ENCODE measurements at regions of chr16 and their contacts with region 1.

Region 1: DNA sequence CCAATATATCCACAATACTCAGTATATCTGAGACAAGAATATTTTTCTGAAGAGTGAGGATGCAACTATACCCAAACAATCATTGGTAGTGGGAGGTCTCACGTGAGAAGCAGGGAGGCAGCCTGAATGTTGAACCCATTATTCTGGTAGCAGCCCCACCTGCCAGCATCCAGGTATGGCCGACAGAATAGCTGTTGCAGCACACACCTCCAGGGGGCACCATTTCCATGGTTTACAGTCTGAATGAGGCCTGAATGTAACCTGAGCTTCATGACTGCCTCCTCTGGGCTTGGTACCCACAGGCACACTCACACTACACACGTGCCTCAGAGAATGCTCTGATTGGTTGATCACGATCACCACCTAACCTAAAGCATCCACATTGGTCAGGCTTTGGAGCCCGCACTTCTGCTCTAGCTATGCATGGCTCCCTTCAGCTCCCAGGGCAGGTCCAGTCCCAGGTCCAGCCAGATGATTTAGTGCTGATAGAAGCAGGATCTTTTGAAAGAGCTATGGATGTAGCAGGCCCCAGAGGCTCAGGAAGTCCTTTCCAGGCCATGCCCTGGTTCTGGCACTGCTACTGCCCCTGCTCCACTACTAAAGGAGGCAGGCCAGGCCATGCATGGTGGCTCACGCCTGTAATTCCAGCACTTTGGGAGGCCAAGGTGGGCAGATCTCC is 11.0 kb upstream of the CBFB start:
- DNase-seq: peak; percentile 72 to 87 (median 77)
- H3K4me3 ChIP-seq: no peak overlapping the region
- H3K4me3 Mint-ChIP-seq: peak overlapping the region in 1 of 7 donors; percentile 61
- H3K27ac ChIP-seq: no peak overlapping the region
- H3K27ac Mint-ChIP-seq: peak overlapping the region in 3 of 8 donors; percentile 1 to 66 (median 64)
- H3K4me1 ChIP-seq: peaks cover 16% of the 10 kb centered on the region
- H3K4me1 Mint-ChIP-seq: peaks cover 2 to 9% (median 6%) of the 10 kb centered on the region in 3 donors
- H3K27me3 ChIP-seq: no peaks in the 10 kb centered on the region
- H3K27me3 Mint-ChIP-seq: peaks cover 0 to 3% of the 10 kb centered on the region in 2 donors

Region 2: DNA sequence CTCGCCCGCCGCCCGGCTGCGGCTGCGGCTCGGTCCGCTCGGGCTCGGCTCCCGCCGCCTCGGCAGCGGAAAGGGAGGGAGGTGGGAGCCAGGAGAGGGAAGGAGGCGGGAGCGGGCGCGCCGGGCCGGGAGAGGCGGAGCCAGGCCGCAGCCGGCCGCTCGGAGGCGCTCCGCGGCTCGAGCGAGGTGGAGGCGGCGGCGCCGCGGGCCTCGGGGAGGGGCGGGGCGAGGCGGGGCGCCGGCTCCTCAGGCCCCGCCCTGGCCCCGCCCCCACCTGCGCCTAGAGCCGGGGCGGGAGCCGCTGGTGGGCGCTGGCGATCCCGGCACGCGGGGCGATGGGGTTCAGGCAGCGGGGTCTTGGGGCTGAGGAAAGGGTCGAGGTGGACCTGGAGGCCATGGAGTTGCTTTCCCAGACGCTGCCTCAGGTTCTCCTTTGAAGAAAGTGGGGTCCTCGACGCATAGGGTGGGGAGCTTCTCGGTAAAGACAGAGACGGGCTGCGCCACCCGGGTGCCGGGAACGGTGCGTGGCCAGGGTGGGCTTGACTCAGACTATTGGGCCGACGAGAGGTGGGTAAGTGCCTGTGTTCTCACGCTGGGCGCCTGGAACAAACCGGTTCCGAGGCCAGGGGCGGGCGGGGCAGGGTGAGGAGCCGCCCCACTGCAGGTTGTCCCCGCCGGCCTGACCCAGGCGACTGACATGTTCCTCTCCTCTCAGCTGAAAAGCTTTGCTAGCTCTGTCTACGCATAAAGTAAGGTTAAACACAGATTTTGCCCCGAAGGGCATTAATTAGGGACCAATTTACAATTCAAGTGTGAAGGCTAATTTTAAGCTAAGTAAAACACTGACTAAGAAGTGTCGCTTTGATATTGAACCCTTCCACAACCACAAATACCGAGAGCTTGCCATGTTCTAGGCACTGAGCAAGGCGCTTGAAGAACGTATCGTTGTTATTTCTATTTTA is 321.0 kb before region 1 on chr16 and contains the start of gene CMTM4:
- CTCF ChIA-PET with region 1: no interaction called
- POLR2A ChIA-PET with region 1: no interaction called
- DNase-seq: peak; percentile 73 to 81 (median 75)
- H3K4me3 ChIP-seq: peak within 1 kb of the TSS; percentile 75
- H3K4me3 Mint-ChIP-seq: peak within 1 kb of the TSS; percentile 82 to 92 (median 85)
- H3K27ac ChIP-seq: peak within 1 kb of the TSS; percentile 9
- H3K27ac Mint-ChIP-seq: peak within 1 kb of the TSS in 4 of 8 donors; percentile 11 to 97 (median 56)
- H3K4me1 ChIP-seq: peaks cover 13% of the 10 kb centered on the region
- H3K4me1 Mint-ChIP-seq: peaks cover 5 to 17% (median 14%) of the 10 kb centered on the region in 3 donors
- H3K27me3 ChIP-seq: no peaks in the 10 kb centered on the region
- H3K27me3 Mint-ChIP-seq: peaks cover 9 to 13% of the 10 kb centered on the region in 2 donors
- total RNA-seq, gene CMTM4: 4.1 to 4.4 TPM

Region 3: DNA sequence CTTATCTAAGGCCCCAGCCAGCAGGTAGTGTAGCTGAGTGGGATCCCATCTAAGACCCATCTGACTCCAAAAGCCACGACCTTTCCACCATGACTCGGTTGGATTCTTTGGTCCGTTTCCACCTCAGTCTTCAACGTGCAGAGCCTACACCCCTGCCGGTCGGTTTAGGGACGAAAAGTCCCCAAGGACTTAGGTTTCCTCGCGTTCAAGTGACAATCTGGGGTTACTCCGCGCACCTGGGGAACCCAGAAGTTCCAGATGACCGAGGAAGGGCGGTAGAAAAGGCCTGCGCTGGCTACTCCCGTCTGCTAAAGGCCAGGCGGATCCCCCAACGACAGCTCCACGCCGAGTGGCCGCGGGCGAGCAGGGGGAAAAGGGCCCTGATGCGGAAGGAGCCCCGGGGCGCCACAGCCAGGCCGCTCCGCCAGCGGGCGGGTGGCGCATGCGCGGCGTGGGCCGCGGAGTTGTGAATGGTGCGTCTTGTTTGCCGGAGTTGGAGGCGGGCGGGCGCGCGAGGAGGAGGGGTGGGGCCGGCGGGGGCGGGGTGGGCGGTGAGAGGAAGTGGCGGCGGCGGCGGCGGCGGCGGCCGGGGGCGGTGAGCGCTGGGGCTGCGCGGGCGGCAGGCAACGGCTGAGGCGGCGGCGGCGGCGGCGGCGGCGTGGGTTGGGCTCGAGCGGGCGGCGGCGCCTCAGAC is 10.8 kb after region 1 on chr16 and contains the start of gene CBFB:
- CTCF ChIA-PET with region 1: interaction called, 37 read pairs
- POLR2A ChIA-PET with region 1: interaction called, 9 read pairs
- DNase-seq: peak; percentile 91 to 97 (median 96)
- H3K4me3 ChIP-seq: peak within 1 kb of the TSS; percentile 89
- H3K4me3 Mint-ChIP-seq: peak within 1 kb of the TSS; percentile 88 to 98 (median 90)
- H3K27ac ChIP-seq: peak within 1 kb of the TSS; percentile 94
- H3K27ac Mint-ChIP-seq: peak within 1 kb of the TSS; percentile 91 to 99 (median 96)
- H3K4me1 ChIP-seq: peaks cover 39% of the 10 kb centered on the region
- H3K4me1 Mint-ChIP-seq: peaks cover 38 to 46% (median 44%) of the 10 kb centered on the region in 3 donors
- H3K27me3 ChIP-seq: no peaks in the 10 kb centered on the region
- H3K27me3 Mint-ChIP-seq: no peaks in the 10 kb centered on the region
- total RNA-seq, gene CBFB: 132 to 141 TPM

Region 4: DNA sequence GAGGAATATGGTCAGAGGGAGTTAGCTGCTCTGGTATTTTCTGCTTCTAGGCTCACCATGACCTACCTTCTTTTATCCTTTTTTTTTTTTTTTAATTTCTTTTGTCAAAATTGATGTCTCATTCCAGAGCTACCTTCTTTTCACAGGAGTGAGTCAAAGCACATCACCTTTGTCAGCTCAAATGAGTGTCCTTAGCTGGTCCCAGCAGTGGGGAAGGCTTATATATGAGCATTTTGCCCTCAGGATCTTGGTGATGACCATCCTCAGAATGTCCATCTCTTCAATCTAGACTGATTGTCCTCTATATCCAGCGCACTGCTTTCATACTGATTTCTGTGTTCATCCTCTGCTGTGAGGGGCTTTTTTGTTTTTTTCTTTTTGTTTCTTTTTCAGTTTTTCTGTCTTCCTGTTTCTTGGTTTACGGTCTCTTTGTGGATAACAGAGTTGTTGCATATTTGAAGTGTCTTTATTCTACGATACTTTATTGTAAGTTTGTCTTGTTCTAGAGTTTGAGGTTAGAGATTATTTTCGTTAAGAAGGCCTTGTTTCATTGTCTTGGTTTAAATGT is 35.9 kb after region 1 on chr16:
- CTCF ChIA-PET with region 1: no interaction called
- POLR2A ChIA-PET with region 1: no interaction called
- DNase-seq: peak in 2 of 5 donors; percentile 21 to 45
- H3K4me3 ChIP-seq: peak overlapping the region; percentile 33
- H3K4me3 Mint-ChIP-seq: peak overlapping the region; percentile 66 to 81 (median 77)
- H3K27ac ChIP-seq: peak overlapping the region; percentile 36
- H3K27ac Mint-ChIP-seq: peak overlapping the region; percentile 75 to 98 (median 89)
- H3K4me1 ChIP-seq: peaks cover 40% of the 10 kb centered on the region
- H3K4me1 Mint-ChIP-seq: peaks cover 38 to 66% (median 62%) of the 10 kb centered on the region in 3 donors
- H3K27me3 ChIP-seq: no peaks in the 10 kb centered on the region
- H3K27me3 Mint-ChIP-seq: no peaks in the 10 kb centered on the region

Region 5: DNA sequence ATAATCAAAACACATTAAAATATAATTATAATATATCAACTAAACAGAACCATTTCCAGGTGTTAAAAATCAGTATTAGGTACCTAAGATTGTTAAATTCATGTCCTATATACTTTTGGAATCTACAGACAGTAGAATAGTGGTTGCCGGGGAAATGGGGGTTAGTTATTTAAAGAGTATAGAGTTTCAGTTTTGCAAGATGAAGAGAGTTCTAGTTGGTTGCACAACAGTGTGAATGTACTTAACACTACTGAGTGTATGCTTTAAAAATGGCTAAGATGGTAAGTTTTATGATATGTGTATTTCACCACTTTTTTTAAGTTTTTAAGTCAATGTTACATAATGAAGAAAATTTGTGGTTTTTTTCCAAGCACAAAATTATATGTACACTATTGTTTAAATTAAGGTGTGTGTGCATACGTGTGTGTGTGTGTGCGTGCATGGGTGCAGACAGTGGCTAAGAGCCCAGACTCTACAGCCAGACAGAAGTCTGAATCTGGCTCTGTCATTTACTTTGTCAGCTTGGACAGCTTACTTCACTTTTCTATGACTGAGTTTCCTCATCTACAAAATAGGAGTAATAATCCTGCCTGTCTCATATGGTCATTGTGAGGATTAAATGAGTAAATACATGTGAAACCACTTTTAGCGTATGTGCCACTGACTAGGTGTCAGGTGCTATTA is 66.5 kb after region 1 on chr16:
- CTCF ChIA-PET with region 1: no interaction called
- POLR2A ChIA-PET with region 1: no interaction called
- DNase-seq: no peak
- H3K4me3 ChIP-seq: no peak overlapping the region
- H3K4me3 Mint-ChIP-seq: no peak overlapping the region
- H3K27ac ChIP-seq: no peak overlapping the region
- H3K27ac Mint-ChIP-seq: no peak overlapping the region
- H3K4me1 ChIP-seq: no peaks in the 10 kb centered on the region
- H3K4me1 Mint-ChIP-seq: peaks cover 10 to 23% (median 22%) of the 10 kb centered on the region in 3 donors
- H3K27me3 ChIP-seq: no peaks in the 10 kb centered on the region
- H3K27me3 Mint-ChIP-seq: no peaks in the 10 kb centered on the region

Region 6: GRCh38 chr16:67173808-67174705 is 156.1 kb after region 1 on chr16:
- CTCF ChIA-PET with region 1: interaction called, 10 read pairs
- POLR2A ChIA-PET with region 1: no interaction called
- DNase-seq: peak in 4 of 5 donors; percentile 58 to 79 (median 61)
- H3K4me3 ChIP-seq: peak overlapping the region; percentile 58
- H3K4me3 Mint-ChIP-seq: peak overlapping the region; percentile 75 to 92 (median 87)
- H3K27ac ChIP-seq: no peak overlapping the region
- H3K27ac Mint-ChIP-seq: peak overlapping the region in 7 of 8 donors; percentile 18 to 91 (median 50)
- H3K4me1 ChIP-seq: peaks cover 38% of the 10 kb centered on the region
- H3K4me1 Mint-ChIP-seq: peaks cover 44 to 73% (median 48%) of the 10 kb centered on the region in 3 donors
- H3K27me3 ChIP-seq: peaks cover 24% of the 10 kb centered on the region
- H3K27me3 Mint-ChIP-seq: peaks cover 17 to 18% of the 10 kb centered on the region in 2 donors